H1 (cell line): ENCODE measurements at regions of chr4 and their contacts with region 1.

Region 1: GRCh38 chr4:181528570-181529184 is 714.5 kb upstream of the TENM3 start:
- DNase-seq: peak; percentile 68 to 89
- H3K4me3 ChIP-seq: no peak overlapping the region; a peak in 1 of 8 replicates
- H3K27ac ChIP-seq: no peak overlapping the region
- H3K4me1 ChIP-seq: peaks cover 0 to 4% (median 3%) of the 10 kb centered on the region in 4 experiments; a peak in 4 of 7 replicates
- H3K27me3 ChIP-seq: no peaks in the 10 kb centered on the region
- CTCF ChIP-seq: peak; percentile 90 to 97 (median 95)
- EP300 ChIP-seq: no peak
- POLR2A ChIP-seq: no peak
- RAD21 ChIP-seq: peak; percentile 100

Region 2: DNA sequence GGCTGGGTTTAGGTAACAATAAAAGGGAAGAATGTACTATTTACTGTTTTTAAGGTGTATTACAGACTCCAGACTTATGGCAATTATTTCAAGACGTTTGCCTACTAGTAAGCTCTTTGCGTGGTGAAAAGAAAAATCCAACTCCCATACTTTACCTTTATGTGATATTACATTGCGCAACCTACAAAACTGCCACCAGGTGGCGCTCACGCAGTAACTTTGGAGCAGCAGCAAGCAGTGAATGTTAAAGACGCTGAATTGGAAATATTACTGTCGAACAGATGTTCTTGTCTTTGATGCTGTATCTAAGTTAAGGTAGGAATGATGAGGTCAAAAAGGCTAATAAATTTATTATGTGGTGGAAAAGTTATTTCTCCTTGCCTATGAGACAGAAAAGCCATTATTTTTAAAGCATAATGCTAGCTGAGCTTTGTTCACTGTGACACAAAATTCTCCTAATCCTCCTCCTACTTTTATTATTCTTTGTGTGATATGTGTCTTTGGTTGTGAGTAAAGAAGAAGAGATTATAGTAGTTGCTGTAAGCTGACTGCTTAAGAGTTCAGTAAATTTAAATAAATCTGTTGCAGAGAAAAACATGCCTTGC is 385.3 kb before region 1 on chr4:
- CTCF ChIA-PET with region 1: interaction called, 83 read pairs
- POLR2A ChIA-PET with region 1: no interaction called
- DNase-seq: peak; percentile 34 to 83
- H3K4me3 ChIP-seq: no peak overlapping the region
- H3K27ac ChIP-seq: no peak overlapping the region
- H3K4me1 ChIP-seq: no peaks in the 10 kb centered on the region
- H3K27me3 ChIP-seq: no peaks in the 10 kb centered on the region
- CTCF ChIP-seq: peak; percentile 57 to 89 (median 81)
- EP300 ChIP-seq: no peak
- POLR2A ChIP-seq: no peak
- RAD21 ChIP-seq: peak; percentile 97 to 98

Region 3: GRCh38 chr4:181261279-181261678 is 267.4 kb before region 1 on chr4:
- CTCF ChIA-PET with region 1: interaction called, 23 read pairs
- POLR2A ChIA-PET with region 1: no interaction called
- DNase-seq: no peak
- H3K4me3 ChIP-seq: no peak overlapping the region
- H3K27ac ChIP-seq: no peak overlapping the region
- H3K4me1 ChIP-seq: peaks cover 0 to 3% (median 1%) of the 10 kb centered on the region in 4 experiments; a peak in 3 of 7 replicates
- H3K27me3 ChIP-seq: no peaks in the 10 kb centered on the region
- CTCF ChIP-seq: peak in 2 of 3 experiments; percentile 47 to 52; a peak in 2 of 4 replicates
- EP300 ChIP-seq: no peak
- POLR2A ChIP-seq: no peak
- RAD21 ChIP-seq: peak; percentile 62 to 70

Region 4: DNA sequence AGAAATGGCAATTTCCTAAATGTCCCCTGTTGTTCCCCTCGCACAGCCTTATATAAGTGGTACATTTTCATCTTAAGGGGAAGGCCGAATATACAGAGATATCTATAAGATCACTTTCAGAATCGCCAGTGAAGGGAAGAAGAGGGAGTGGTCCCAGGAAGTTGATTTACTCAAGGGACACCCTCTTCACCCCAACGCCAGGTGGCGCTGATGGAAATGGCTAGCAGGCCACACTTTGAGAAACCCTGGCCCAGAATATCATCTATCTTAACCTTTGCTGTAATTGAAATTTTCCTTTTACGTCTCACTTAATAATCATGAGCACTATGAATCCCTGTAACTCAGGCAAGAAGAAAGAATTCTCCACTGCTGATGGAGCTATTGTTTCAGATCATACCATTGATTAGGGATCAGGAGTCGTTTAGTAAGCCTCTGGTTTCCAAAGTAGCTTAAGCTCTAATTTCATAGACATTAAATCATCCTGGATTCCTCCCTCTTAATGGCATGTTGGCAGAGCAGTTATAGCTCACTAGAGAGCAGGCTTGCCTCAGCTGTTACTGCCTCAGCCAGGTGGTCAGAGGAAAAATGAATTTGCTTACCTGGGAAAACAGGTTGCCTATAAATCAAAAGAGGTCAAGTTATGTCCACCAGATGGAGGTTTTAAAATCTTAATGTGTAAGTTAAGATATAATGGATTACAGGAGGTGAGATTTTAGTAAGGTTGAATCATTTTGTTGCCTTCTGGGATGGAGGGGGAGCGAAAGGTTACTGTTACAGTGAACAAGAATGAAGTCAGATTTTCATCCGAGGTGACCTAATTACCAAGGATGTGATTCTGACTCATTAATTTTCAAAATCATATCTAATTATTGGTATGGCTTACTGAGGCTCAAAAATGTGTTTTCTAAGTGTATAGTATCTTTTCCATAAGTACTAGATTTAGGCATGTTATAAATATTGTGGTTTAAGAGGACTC is 226.7 kb before region 1 on chr4:
- CTCF ChIA-PET with region 1: interaction called, 29 read pairs
- POLR2A ChIA-PET with region 1: no interaction called
- DNase-seq: peak in 1 of 2 experiments; percentile 69
- H3K4me3 ChIP-seq: no peak overlapping the region
- H3K27ac ChIP-seq: no peak overlapping the region
- H3K4me1 ChIP-seq: no peaks in the 10 kb centered on the region; a peak in 1 of 7 replicates
- H3K27me3 ChIP-seq: no peaks in the 10 kb centered on the region
- CTCF ChIP-seq: peak; percentile 74 to 81 (median 76)
- EP300 ChIP-seq: no peak
- POLR2A ChIP-seq: no peak
- RAD21 ChIP-seq: peak; percentile 73 to 79

Region 5: GRCh38 chr4:181468451-181468850 is 60.2 kb before region 1 on chr4:
- CTCF ChIA-PET with region 1: no interaction called
- POLR2A ChIA-PET with region 1: no interaction called
- DNase-seq: no peak
- H3K4me3 ChIP-seq: no peak overlapping the region
- H3K27ac ChIP-seq: no peak overlapping the region
- H3K4me1 ChIP-seq: no peaks in the 10 kb centered on the region
- H3K27me3 ChIP-seq: no peaks in the 10 kb centered on the region
- CTCF ChIP-seq: no peak
- EP300 ChIP-seq: no peak
- POLR2A ChIP-seq: no peak
- RAD21 ChIP-seq: no peak

Region 6: GRCh38 chr4:181507180-181507835 is 21.4 kb before region 1 on chr4:
- CTCF ChIA-PET with region 1: interaction called, 11 read pairs
- POLR2A ChIA-PET with region 1: no interaction called
- DNase-seq: no peak
- H3K4me3 ChIP-seq: no peak overlapping the region
- H3K27ac ChIP-seq: no peak overlapping the region
- H3K4me1 ChIP-seq: peaks cover 0 to 13% (median 8%) of the 10 kb centered on the region in 4 experiments; a peak in 6 of 7 replicates
- H3K27me3 ChIP-seq: no peaks in the 10 kb centered on the region
- CTCF ChIP-seq: no peak
- EP300 ChIP-seq: no peak
- POLR2A ChIP-seq: no peak
- RAD21 ChIP-seq: no peak

Region 7: DNA sequence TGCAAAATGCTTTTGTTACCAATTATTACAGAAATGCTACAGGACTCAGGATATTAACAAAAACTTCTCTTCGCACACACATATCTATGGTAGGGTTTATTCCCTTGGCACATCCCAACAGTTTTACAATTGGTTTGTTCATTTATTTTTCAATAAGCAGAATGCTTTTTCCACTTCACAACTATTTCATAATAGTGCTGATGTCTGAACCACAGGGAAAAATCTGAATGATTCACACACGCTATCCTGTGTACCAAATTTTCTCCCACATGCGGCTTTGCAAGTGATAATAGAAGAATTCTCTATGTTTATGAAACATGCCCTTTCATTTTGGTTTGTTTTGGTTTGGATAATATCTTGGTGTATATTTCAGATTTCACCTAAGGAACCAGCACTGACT is 11.2 kb before region 1 on chr4:
- CTCF ChIA-PET with region 1: interaction called, 13 read pairs
- POLR2A ChIA-PET with region 1: interaction called, 3 read pairs
- DNase-seq: no peak
- H3K4me3 ChIP-seq: no peak overlapping the region
- H3K27ac ChIP-seq: no peak overlapping the region
- H3K4me1 ChIP-seq: no peaks in the 10 kb centered on the region
- H3K27me3 ChIP-seq: no peaks in the 10 kb centered on the region
- CTCF ChIP-seq: no peak
- EP300 ChIP-seq: no peak
- POLR2A ChIP-seq: no peak
- RAD21 ChIP-seq: no peak